GM12878 (cell line): ENCODE measurements at regions of chr10 and their contacts with region 1.

Region 1: DNA sequence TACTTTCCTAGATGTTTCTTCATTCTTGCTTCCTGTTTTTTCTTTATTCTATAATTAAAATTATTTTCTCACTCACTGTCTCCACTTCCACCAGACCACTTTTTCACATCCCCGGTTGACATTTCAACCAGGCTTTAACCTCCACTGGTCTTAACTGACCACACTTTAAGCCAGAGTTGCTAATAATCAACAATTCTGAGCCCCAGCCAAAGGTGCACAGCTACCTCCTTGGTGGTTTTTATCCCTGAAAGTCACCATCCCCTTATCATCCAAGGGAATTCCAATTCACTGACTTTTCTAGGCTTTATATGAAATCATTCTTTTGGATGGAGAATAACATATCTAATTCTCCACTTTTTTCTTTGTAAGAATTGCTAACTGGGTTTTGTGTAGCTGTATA is 138.9 kb downstream of the FRMD4A start:
- DNase-seq: no peak
- ATAC-seq: no peak
- H3K4me3 ChIP-seq: no peak overlapping the region
- H3K27ac ChIP-seq: no peak overlapping the region
- H3K4me1 ChIP-seq: no peaks in the 10 kb centered on the region
- H3K27me3 ChIP-seq: peaks cover 0 to 3% of the 10 kb centered on the region in 2 experiments; a peak in 2 of 4 replicates
- CTCF ChIP-seq: no peak
- EP300 ChIP-seq: no peak
- POLR2A ChIP-seq: no peak
- RAD21 ChIP-seq: no peak

Region 2: DNA sequence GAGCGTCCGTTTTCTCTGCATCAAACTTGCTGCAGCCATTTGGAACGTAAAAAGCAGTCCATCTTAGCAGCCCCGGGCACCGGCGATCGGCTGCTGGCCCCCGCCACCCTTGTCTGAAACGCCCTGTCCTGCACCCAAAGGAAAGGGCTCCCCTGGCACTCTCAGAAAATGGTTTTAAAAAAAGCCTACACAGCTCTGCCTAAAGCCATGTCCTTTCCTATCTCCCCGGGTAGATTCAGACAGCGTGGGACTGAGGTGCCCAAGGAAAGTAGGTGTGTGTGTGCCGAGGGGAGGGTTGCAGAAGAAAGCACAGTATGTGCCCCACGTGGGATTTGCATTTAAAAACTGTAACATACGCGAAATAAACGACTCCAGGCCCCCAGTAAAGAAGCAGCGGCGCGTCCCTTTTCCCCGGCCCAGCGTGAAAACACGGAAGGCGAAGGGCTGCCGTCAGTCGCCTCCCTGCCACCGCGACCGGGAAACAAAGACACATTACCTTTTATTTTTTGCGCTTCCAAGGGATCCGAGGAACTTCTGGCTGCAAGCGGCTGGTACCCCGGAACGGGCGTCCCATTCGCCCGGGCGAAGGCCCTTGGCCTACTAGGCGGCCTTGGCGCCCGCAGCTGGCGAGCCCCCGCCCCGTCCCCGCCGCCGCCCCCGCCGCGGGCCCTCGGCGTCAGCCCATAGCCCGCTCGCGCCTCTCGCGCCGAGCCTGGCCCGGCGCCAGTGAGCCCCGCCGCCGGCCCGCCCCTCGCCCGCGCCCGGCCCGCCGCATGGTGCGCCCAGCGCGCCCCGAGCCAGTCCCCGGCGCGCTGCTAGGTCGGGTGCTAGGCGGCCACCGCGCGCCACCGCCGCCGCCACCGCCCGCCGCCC is 300.5 kb before region 1 on chr10:
- CTCF ChIA-PET with region 1: no interaction called
- POLR2A ChIA-PET with region 1: no interaction called
- RAD21 ChIA-PET with region 1: no interaction called
- SMC1A ChIA-PET with region 1: no interaction called
- in situ Hi-C with region 1: no loop called
- intact Hi-C with region 1: no loop called
- DNase-seq: no peak
- ATAC-seq: no peak
- H3K4me3 ChIP-seq: no peak overlapping the region; the same call in 1 of the 2 replicates
- H3K27ac ChIP-seq: no peak overlapping the region
- H3K4me1 ChIP-seq: peaks cover 11% of the 10 kb centered on the region
- H3K27me3 ChIP-seq: peaks cover 0 to 13% of the 10 kb centered on the region in 2 experiments; a peak in 1 of 4 replicates
- CTCF ChIP-seq: no peak
- EP300 ChIP-seq: no peak
- POLR2A ChIP-seq: no peak
- RAD21 ChIP-seq: no peak

Region 3: GRCh38 chr10:14325325-14325955 is 133.6 kb after region 1 on chr10:
- CTCF ChIA-PET with region 1: interaction called, 12 read pairs
- POLR2A ChIA-PET with region 1: no interaction called
- RAD21 ChIA-PET with region 1: interaction called, 3 read pairs
- SMC1A ChIA-PET with region 1: no interaction called
- in situ Hi-C with region 1: no loop called
- intact Hi-C with region 1: loop called (anchors 5 kb)
- DNase-seq: no peak
- ATAC-seq: peak; percentile 56
- H3K4me3 ChIP-seq: no peak overlapping the region
- H3K27ac ChIP-seq: no peak overlapping the region
- H3K4me1 ChIP-seq: no peaks in the 10 kb centered on the region
- H3K27me3 ChIP-seq: no peaks in the 10 kb centered on the region; a peak in 1 of 4 replicates
- CTCF ChIP-seq: peak; percentile 48 to 67 (median 61); a peak in 5 of 6 replicates
- EP300 ChIP-seq: no peak
- POLR2A ChIP-seq: no peak
- RAD21 ChIP-seq: peak; percentile 43